Activated CD8-positive, alpha-beta T cell treated with anti-CD3 and anti-CD28 coated beads, Interleukin-2, amount 10 ng/mL, durations not matched to agents 7 days and 5 days (primary cell): ENCODE measurements at regions of chr1 and their contacts with region 1.

Region 1: DNA sequence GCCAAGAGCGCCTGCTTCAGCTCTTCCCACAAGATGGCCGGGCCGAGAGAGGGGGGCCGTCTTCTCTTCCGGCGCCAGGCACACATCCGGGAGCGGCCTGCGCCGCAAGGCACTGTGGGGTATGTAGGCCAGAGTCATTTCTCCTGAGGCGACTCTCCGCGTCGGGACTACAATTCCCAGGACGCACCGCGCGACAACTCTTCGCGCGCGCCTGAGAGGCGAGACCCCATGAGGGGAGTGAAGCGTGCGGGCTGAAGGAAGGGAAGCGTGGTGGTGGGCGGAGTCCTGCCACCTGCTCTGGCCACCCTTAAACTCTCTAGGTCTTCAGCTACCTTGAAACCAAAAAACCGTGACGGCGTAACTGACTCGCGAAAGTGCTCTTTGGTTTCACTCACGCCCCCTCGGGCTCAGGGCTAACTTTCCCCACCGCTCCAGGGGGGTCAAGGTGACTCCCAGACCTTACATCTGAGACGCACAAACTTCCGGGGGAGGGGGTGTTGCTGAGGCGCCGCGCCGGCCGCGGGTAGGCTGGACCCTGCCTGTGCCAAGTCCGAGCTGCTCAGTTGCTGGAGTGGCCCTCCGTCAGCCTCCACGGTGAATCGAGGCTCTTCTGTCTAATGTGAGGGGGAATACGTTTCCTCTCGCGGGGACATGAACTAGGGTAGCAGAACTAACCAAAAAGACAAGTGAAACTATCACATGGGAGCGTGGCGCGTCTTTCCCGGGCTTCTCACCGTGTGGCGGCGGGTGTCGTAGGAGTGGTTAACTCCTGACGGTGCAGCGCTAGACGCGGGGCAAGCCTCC is at the start of gene SERBP1:
- DNase-seq: peak; percentile 97
- ATAC-seq: peak; percentile 82
- H3K4me3 Mint-ChIP-seq: peak within 1 kb of the TSS; percentile 78
- H3K27ac Mint-ChIP-seq: peak within 1 kb of the TSS; percentile 91
- H3K4me1 Mint-ChIP-seq: peaks cover 46% of the 10 kb centered on the region
- H3K27me3 Mint-ChIP-seq: no peaks in the 10 kb centered on the region
- total RNA-seq, gene SERBP1: 280 to 297 TPM

Region 2: DNA sequence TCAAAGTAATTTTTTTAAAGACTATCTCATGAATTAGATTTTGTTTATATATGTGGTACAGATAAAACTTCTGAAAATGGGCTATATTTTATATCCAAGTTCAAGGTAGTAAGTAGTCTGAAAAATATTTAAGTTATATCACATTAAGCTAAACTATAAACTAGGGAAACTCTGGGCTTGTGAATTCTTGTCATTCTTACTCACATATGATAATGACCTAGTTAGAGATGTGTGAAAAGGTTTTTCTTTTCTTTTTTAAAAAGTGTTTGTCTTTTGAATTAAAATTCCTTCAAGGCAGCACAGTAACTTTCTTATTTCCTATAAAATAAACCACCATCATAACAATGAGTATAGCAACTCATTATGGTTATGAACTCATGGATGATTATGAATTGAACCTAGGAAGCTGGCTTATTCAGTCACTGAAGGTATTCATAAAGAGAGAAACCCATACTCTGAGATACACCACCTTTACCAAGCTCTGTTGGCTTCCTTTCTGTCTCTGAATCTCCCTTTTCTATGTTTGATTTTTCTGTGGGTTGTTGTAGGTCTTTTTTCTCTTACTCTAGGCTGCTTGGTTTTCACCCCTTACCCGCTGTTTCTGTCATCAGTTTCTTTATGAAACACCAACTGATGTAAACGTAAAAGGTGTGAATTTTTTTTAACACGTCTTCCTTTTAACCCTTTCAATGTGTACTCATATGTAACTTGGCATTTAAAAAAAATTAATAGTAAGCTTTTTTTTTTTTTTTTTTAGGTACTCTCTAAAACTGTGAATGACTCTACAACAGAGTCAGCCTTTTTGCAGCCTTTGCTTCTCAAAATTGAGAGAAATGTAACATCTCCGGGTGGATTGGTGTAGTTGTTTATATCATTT is 97.7 kb before region 1 on chr1:
- CTCF ChIA-PET with region 1: interaction called, 3 read pairs
- POLR2A ChIA-PET with region 1: interaction called, 13 read pairs
- DNase-seq: peak; percentile 71
- ATAC-seq: peak; percentile 86
- H3K4me3 Mint-ChIP-seq: peak overlapping the region; percentile 45
- H3K27ac Mint-ChIP-seq: peak overlapping the region; percentile 91
- H3K4me1 Mint-ChIP-seq: peaks cover 71% of the 10 kb centered on the region
- H3K27me3 Mint-ChIP-seq: no peaks in the 10 kb centered on the region

Region 3: GRCh38 chr1:67347688-67348472 is 82.7 kb before region 1 on chr1:
- CTCF ChIA-PET with region 1: interaction called, 14 read pairs
- POLR2A ChIA-PET with region 1: no interaction called
- DNase-seq: no peak
- ATAC-seq: peak; percentile 35
- H3K4me3 Mint-ChIP-seq: no peak overlapping the region
- H3K27ac Mint-ChIP-seq: no peak overlapping the region
- H3K4me1 Mint-ChIP-seq: peaks cover 21% of the 10 kb centered on the region
- H3K27me3 Mint-ChIP-seq: no peaks in the 10 kb centered on the region